ENCODE measurements at regions of chr5 and their contacts with region 1.

Region 1: GRCh38 chr5:88680253-88681132 is 202.5 kb downstream of the MEF2C start:
- DNase-seq: peak; percentile 88
- ATAC-seq: peak; percentile 89
- H3K4me3 Mint-ChIP-seq: peak overlapping the region; percentile 19
- H3K27ac Mint-ChIP-seq: no peak overlapping the region
- H3K4me1 Mint-ChIP-seq: peaks cover 17% of the 10 kb centered on the region
- H3K27me3 Mint-ChIP-seq: peaks cover 69% of the 10 kb centered on the region

Region 2: DNA sequence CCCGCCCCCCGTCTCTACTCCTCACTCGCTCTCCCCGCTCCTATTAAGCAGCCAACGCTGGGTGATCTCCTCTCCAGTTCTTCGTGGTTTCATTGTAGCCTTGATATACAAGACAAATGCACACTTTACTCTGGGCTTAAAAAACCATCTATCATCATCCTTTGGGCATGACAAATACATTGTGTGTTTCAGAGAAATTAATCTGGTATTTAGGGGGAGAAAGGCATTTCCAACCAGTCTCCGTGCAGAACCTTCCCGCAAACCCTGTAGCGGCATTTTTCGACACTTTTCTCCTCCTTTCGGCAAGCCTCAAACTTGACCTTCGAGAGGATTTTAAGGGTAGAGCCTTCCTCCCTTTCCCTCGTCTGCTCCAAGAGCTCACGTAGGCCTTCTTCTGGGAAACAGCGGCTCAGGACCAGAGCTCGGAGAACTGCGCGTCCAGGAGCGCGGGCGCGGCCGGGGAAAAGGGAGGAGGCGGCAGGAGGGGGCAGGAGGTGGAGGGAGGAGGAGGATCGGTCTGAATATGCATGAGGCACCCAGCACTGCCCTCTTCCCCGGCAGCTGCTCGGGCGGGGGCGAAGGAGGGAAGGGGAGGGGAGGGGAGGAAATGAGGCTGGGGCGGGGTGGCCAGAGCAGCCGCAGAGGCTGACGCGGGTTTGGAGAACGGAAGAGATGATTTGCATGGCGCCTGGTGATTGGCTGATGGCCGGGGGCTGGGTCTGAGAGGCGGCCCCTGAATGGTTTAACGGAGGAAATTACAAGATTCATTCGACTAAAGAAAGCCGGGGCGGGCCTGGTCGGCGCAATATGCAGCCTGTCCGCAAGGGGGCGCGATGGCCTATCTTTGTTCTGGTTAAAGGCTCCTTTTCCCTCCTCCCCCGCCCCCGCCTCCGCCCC is 539.4 kb before region 1 on chr5:
- CTCF ChIA-PET with region 1: interaction called, 3 read pairs
- POLR2A ChIA-PET with region 1: no interaction called
- intact Hi-C with region 1: loop called (anchors 1 to 5 kb)
- DNase-seq: peak; percentile 93
- ATAC-seq: peak; percentile 93
- H3K4me3 Mint-ChIP-seq: no peak overlapping the region
- H3K27ac Mint-ChIP-seq: no peak overlapping the region
- H3K4me1 Mint-ChIP-seq: peaks cover 20% of the 10 kb centered on the region
- H3K27me3 Mint-ChIP-seq: peaks cover 36% of the 10 kb centered on the region

Region 3: GRCh38 chr5:88602584-88602983 is 77.9 kb before region 1 on chr5:
- CTCF ChIA-PET with region 1: no interaction called
- POLR2A ChIA-PET with region 1: no interaction called
- intact Hi-C with region 1: no loop called
- DNase-seq: peak; percentile 56
- ATAC-seq: no peak
- H3K4me3 Mint-ChIP-seq: no peak overlapping the region
- H3K27ac Mint-ChIP-seq: no peak overlapping the region
- H3K4me1 Mint-ChIP-seq: no peaks in the 10 kb centered on the region
- H3K27me3 Mint-ChIP-seq: peaks cover 7% of the 10 kb centered on the region

Region 4: GRCh38 chr5:88660947-88661805 is 19.3 kb before region 1 on chr5:
- CTCF ChIA-PET with region 1: interaction called, 5 read pairs
- POLR2A ChIA-PET with region 1: no interaction called
- intact Hi-C with region 1: loop called (anchors 1 to 2 kb)
- DNase-seq: peak; percentile 71
- ATAC-seq: peak; percentile 72
- H3K4me3 Mint-ChIP-seq: peak overlapping the region; percentile 43
- H3K27ac Mint-ChIP-seq: no peak overlapping the region
- H3K4me1 Mint-ChIP-seq: peaks cover 16% of the 10 kb centered on the region
- H3K27me3 Mint-ChIP-seq: peaks cover 54% of the 10 kb centered on the region

Region 5: DNA sequence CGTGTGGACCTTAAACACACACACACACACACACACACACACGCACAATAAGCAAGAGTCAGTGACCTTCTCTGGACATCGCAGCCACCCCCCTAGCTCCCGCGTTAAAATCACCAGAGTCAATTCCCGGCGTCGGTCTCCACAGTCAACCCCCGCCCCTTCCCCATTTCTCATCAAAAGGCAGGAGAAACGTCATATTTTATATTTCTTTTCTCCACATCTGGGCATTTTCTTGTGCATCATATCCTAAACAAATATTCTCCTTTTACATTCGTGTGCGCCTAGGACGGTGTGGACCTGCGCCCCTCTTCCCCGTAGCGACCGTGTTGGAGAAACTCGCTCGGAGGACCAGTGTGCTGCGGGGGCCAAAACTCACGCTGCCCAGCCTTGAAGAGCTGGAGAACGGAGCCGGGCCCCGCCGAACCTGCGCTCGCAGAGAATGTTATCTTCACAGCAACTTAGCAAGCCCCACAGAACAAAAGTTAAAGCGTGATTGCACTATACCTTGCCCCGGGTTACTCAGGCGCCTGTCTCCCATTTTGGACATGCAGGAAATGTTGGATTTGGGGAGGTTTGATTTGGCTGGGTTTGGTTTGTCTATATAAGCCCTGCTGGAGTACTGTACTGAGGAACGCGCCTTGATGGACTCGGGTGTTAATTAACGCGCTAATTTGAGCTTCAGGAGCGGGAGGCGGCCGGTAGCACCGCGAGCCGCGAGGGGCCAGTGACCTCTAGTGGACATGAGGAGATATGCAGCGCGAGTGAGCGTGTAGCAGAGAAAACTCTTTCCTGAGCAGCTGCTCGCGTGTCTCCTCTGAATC is 10.1 kb after region 1 on chr5:
- CTCF ChIA-PET with region 1: interaction called, 51 read pairs
- POLR2A ChIA-PET with region 1: no interaction called
- intact Hi-C with region 1: loop called (anchors 1 to 2 kb)
- DNase-seq: peak; percentile 82
- ATAC-seq: peak; percentile 82
- H3K4me3 Mint-ChIP-seq: peak overlapping the region; percentile 38
- H3K27ac Mint-ChIP-seq: no peak overlapping the region
- H3K4me1 Mint-ChIP-seq: peaks cover 15% of the 10 kb centered on the region
- H3K27me3 Mint-ChIP-seq: peaks cover 84% of the 10 kb centered on the region

Measured in activated CD4-positive, alpha-beta T cell treated with anti-CD3 and anti-CD28 coated beads for 36 hours (primary cell).